PC-9 (cell line): ENCODE measurements at regions of chr17 and their contacts with region 1.

Region 1: GRCh38 chr17:3754458-3755334 is 31.0 kb downstream of the HASPIN start:
- DNase-seq: peak; percentile 94 to 100
- H3K4me3 ChIP-seq: peak overlapping the region; percentile 94
- H3K27ac ChIP-seq: peak overlapping the region; percentile 43
- H3K4me1 ChIP-seq: peaks cover 11% of the 10 kb centered on the region
- H3K27me3 ChIP-seq: no peaks in the 10 kb centered on the region
- CTCF ChIP-seq: no peak

Region 2: DNA sequence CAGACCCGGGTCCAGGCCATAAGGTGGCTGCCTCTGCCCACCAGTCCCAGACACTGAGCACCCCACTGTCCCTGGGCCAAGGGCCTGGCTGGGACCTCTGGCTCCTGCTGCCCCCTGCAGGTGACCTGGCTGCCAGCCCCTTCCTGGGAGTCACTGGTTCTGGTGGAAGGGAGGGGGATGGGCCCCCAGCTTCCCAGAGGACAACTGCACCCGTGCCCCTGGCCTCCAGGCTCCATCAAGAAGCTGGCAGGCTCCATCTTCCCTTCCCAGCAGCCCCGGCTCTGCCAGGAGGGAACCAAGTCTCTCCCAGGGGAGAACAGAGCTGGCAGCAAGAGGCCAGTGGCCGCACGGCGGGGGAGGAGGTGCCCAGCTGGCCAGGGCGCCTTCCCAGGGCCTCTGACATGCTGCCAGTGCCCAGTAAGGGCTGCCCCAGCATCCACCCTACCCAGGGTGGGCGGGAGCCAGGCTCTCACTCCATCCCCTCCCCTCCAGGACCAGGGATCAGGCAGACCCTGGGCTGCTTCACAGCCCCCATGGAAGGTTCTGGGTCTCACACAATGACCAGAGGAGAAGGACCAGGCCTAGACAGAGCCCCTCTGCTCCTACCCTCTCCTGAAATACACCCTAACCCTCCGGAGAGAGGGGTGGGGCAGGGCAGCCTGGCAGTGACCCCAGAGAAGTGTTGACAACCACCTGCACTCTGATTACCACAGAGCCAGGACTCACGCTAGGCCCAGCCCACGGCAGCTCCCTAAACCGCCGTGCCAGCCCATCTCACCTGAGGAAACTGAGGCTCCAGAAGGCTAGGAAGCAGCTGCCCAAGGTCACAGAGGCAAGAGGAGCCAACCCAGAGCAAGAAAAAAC is 1046.7 kb before region 1 on chr17:
- CTCF ChIA-PET with region 1: no interaction called
- POLR2A ChIA-PET with region 1: no interaction called
- intact Hi-C with region 1: no loop called
- DNase-seq: peak in 1 of 2 experiments; percentile 24
- H3K4me3 ChIP-seq: no peak overlapping the region
- H3K27ac ChIP-seq: no peak overlapping the region
- H3K4me1 ChIP-seq: peaks cover 27% of the 10 kb centered on the region; the same call in 1 of the 2 replicates
- H3K27me3 ChIP-seq: no peaks in the 10 kb centered on the region
- CTCF ChIP-seq: peak; percentile 49; the same call in 1 of the 2 replicates

Region 3: GRCh38 chr17:2837147-2837561 is 917.5 kb before region 1 on chr17:
- CTCF ChIA-PET with region 1: no interaction called
- POLR2A ChIA-PET with region 1: interaction called, 10 read pairs
- intact Hi-C with region 1: no loop called
- DNase-seq: no peak
- H3K4me3 ChIP-seq: no peak overlapping the region
- H3K27ac ChIP-seq: no peak overlapping the region
- H3K4me1 ChIP-seq: no peaks in the 10 kb centered on the region
- H3K27me3 ChIP-seq: 0 out of 2 replicates have a peak, but pooled peaks cover 7% of the 10 kb centered on the region
- CTCF ChIP-seq: no peak

Region 4: DNA sequence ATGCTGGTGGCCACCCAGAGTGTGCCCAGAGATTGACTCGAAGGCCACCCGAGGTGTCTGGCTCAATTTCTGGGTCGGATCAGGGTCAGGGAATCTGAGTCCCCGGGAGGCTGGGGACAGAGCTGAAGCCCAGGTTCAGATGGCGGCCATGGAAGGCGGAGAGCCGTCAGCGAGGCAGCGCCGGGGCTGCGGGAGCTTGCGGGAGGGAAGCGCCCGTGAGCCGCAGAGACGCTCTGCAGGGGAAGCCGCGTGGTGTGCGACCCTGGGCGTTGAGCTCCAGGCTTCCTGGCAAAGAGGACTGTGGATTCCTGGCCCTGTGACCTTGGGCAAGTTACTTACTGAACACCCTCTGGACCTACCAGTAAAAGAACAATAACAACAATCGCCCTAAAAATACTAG is 282.6 kb before region 1 on chr17:
- CTCF ChIA-PET with region 1: no interaction called
- POLR2A ChIA-PET with region 1: no interaction called
- intact Hi-C with region 1: no loop called
- DNase-seq: no peak
- H3K4me3 ChIP-seq: no peak overlapping the region
- H3K27ac ChIP-seq: no peak overlapping the region
- H3K4me1 ChIP-seq: no peaks in the 10 kb centered on the region
- H3K27me3 ChIP-seq: peaks cover 95% of the 10 kb centered on the region
- CTCF ChIP-seq: no peak

Region 5: DNA sequence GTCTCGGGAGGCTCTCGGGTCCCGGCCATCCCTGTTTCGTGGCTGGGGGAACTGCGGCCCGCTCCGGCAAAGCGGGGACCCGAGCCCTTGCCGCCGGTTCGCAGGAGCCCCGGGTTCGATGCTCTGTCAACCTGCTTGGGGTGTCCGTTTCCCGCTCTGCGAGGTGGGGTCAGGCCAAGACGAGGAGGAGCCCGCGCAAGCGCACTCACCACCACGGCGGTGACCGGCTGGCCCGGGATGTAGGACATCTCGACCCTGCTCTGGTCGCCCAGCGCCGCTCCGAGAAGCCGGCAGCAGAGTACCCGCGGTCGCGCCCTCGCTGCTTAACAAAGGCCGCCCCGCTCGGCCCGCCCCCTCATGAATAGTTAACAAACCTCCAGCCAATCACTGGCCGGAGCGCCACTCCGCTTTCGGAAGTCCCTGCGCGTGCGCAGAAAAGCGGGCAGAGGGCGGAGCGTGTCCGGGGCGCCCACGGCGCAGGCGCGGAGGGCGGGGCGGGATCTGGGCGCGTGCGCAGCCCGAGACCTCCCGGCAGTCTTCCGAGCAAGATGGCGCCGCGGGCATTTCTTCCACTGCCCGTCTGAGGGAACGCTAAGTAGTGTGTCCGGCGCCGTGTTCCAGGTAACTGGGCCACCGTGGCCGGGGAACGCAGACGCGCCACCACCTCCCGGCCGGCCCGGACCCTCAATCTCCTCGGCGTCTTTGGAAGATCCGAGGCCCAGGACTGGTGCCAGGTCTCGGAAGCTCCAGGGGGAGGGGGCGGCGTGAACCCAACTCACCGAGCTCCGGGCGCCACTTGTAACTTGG is 86.2 kb before region 1 on chr17 and contains the starts of genes EMC6 and TAX1BP3:
- CTCF ChIA-PET with region 1: no interaction called
- POLR2A ChIA-PET with region 1: interaction called, 30 read pairs
- intact Hi-C with region 1: loop called (anchors 2 kb)
- DNase-seq: peak; percentile 92 to 100
- H3K4me3 ChIP-seq: peak within 1 kb of the TSS; percentile 95
- H3K27ac ChIP-seq: peak within 1 kb of the TSS; percentile 88
- H3K4me1 ChIP-seq: peaks cover 25% of the 10 kb centered on the region
- H3K27me3 ChIP-seq: no peaks in the 10 kb centered on the region
- CTCF ChIP-seq: no peak; the same call in 1 of the 2 replicates
- total RNA-seq, gene EMC6: 89.6 and 89.9 TPM in 2 replicates
- total RNA-seq, gene TAX1BP3: 147 and 168 TPM in 2 replicates

Region 6: DNA sequence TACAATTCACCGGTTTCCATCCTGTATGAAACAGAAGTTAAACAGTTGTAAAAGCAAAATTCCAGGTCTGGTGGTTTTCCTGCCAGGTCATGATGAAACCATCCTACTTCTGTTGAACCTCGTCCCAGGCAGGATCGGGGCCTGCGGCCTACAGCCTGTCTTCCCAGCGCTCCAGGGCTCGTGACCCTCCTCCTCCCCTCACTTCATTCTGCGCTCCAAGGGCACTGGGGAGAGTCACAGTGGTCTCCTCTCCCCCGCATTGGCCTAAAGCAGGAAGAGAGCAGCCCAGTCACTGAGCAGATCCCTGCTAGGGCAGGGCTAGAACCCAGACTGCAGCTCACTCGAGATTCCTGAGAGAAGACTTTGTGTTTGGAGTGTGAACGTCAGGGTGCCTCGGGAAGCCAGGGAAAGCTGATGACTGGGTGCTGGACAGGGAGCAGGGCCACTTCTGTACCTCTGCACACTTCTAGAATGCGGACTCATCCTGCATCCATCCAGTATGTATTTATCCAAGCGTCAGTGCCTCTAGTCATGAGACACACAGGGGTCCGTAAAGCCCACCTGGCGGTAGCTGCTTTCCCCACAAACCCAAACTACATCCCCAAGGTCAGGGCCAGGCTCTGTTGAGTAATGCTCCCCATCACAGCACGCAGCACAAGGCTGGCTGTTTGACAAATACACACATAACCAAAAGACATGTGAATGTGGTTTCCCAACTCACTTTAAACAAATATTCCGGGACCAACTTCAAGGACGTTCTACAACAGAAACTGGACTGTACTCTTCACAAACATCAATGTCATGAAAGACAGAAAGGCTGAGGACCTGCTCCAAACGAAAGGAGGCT is 48.0 kb after region 1 on chr17:
- CTCF ChIA-PET with region 1: interaction called, 10 read pairs
- POLR2A ChIA-PET with region 1: no interaction called
- intact Hi-C with region 1: no loop called
- DNase-seq: no peak
- H3K4me3 ChIP-seq: no peak overlapping the region
- H3K27ac ChIP-seq: no peak overlapping the region
- H3K4me1 ChIP-seq: 0 out of 2 replicates have a peak, but pooled peaks cover 4% of the 10 kb centered on the region
- H3K27me3 ChIP-seq: no peaks in the 10 kb centered on the region
- CTCF ChIP-seq: no peak

Region 7: DNA sequence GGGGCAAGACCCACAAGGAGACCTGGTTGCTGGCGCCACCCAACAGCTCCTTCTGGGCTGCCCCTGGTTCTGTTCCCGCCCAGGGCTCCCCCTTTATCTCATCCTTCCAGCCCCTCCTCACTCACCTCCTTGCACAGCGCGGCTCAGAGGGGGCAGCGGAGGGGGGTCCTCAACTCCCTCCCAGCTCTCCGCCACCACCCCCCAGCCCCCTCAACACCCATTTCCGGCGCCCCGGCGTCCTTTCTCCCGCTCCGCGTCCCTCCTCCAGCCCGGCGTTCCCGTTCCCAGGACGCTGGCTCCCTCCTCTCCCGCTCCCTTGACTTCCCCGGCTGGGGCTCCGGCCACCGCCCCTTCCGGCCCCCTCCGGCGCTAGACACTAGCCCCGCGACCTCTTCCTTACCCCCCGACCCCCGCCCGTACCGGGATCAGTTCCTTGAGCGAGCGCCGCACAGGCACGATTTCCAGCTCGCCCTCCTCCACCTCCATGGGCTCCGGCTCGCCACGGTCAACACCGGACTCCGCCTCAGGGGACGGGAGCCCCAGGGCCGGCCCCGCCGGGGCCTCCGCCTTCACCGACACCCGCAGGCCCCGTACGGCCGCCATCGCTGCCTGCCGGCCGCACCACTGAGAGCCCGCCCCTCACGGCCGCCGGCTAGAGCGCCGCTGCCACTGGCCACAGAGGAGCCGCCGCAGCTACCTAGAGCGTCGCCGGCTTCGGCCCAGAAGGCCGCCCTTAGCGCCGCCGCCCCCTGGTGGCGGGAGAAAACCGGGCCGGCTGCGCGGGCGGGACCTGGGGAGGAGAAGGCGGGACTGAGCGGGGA is 91.1 kb after region 1 on chr17 and contains the start of gene NCBP3:
- CTCF ChIA-PET with region 1: interaction called, 18 read pairs
- POLR2A ChIA-PET with region 1: interaction called, 19 read pairs
- intact Hi-C with region 1: no loop called
- DNase-seq: peak; percentile 83 to 94
- H3K4me3 ChIP-seq: peak within 1 kb of the TSS; percentile 97
- H3K27ac ChIP-seq: peak within 1 kb of the TSS; percentile 51
- H3K4me1 ChIP-seq: peaks cover 10% of the 10 kb centered on the region
- H3K27me3 ChIP-seq: no peaks in the 10 kb centered on the region
- CTCF ChIP-seq: peak; percentile 95
- total RNA-seq, gene NCBP3: 48.2 and 58.5 TPM in 2 replicates